CD14-positive monocyte (primary cell): ENCODE measurements at regions of chr11 and their contacts with region 1.

Region 1: GRCh38 chr11:110026858-110027626 is 66.2 kb upstream of the ZC3H12C start:
- DNase-seq: peak; percentile 84 to 98 (median 90)
- H3K4me3 ChIP-seq: peak overlapping the region in 1 of 3 experiments; percentile 17
- H3K4me3 Mint-ChIP-seq: no peak overlapping the region
- H3K27ac ChIP-seq: peak overlapping the region in 1 of 2 donors; percentile 83
- H3K27ac Mint-ChIP-seq: peak overlapping the region; percentile 77 to 90 (median 84)
- H3K4me1 ChIP-seq: peaks cover 16 to 22% of the 10 kb centered on the region in 2 donors
- H3K4me1 Mint-ChIP-seq: peaks cover 20% of the 10 kb centered on the region
- H3K27me3 ChIP-seq: no peaks in the 10 kb centered on the region
- H3K27me3 Mint-ChIP-seq: no peaks in the 10 kb centered on the region
- CTCF ChIP-seq: no peak

Region 2: DNA sequence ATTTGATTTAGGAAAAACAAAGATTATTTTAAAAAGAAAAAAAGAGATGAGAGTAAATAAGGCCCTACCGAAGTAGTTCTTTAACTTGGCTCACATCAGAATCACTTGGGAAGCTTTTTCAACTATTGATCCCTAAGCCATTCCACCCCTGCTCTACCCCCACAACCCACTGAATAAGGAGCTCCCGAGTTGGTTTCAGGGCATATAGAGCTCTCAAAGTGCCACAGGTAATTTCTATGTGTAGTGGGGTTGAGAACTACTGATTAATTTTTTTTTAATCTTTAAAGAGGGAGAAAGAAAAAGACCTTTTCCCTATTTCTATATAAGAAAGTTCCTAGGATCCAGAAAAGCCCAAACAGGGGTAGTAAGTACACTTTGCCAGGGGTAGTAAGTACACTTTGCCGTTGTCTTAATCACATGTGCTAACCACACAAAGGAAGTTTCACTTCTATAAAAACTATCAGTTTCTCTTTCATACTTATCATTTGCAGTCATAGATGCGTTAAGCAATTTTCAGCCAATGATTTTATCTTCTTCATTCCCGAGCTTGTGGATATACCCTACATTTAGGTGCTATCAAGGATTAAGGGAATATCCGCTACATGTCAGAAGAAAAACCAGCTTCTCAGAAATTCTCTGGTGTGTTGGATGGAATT is 42.3 kb before region 1 on chr11:
- intact Hi-C with region 1: no loop called
- DNase-seq: peak; percentile 48 to 80 (median 79)
- H3K4me3 ChIP-seq: peak overlapping the region in 2 of 3 experiments; percentile 35 to 54
- H3K4me3 Mint-ChIP-seq: peak overlapping the region in 1 of 2 donors; percentile 40
- H3K27ac ChIP-seq: peak overlapping the region; percentile 32 to 81
- H3K27ac Mint-ChIP-seq: peak overlapping the region; percentile 77 to 88 (median 83)
- H3K4me1 ChIP-seq: peaks cover 15 to 17% of the 10 kb centered on the region in 2 donors
- H3K4me1 Mint-ChIP-seq: peaks cover 14% of the 10 kb centered on the region
- H3K27me3 ChIP-seq: no peaks in the 10 kb centered on the region
- H3K27me3 Mint-ChIP-seq: no peaks in the 10 kb centered on the region
- CTCF ChIP-seq: no peak

Region 3: GRCh38 chr11:110086892-110087309 is 59.9 kb after region 1 on chr11:
- intact Hi-C with region 1: loop called in 1 of 2 experiments (anchors 5 kb)
- DNase-seq: peak; percentile 91 to 99 (median 91)
- H3K4me3 ChIP-seq: no peak overlapping the region
- H3K4me3 Mint-ChIP-seq: no peak overlapping the region
- H3K27ac ChIP-seq: peak overlapping the region; percentile 14 to 71
- H3K27ac Mint-ChIP-seq: peak overlapping the region; percentile 37 to 90 (median 81)
- H3K4me1 ChIP-seq: peaks cover 6 to 13% of the 10 kb centered on the region in 2 donors
- H3K4me1 Mint-ChIP-seq: peaks cover 18% of the 10 kb centered on the region
- H3K27me3 ChIP-seq: no peaks in the 10 kb centered on the region
- H3K27me3 Mint-ChIP-seq: peaks cover 0 to 9% (median 4%) of the 10 kb centered on the region in 3 donors
- CTCF ChIP-seq: no peak